Mucosa of descending colon (tissue), 3 donors: ENCODE measurements at regions of chr7 and their contacts with region 1.

Region 1: DNA sequence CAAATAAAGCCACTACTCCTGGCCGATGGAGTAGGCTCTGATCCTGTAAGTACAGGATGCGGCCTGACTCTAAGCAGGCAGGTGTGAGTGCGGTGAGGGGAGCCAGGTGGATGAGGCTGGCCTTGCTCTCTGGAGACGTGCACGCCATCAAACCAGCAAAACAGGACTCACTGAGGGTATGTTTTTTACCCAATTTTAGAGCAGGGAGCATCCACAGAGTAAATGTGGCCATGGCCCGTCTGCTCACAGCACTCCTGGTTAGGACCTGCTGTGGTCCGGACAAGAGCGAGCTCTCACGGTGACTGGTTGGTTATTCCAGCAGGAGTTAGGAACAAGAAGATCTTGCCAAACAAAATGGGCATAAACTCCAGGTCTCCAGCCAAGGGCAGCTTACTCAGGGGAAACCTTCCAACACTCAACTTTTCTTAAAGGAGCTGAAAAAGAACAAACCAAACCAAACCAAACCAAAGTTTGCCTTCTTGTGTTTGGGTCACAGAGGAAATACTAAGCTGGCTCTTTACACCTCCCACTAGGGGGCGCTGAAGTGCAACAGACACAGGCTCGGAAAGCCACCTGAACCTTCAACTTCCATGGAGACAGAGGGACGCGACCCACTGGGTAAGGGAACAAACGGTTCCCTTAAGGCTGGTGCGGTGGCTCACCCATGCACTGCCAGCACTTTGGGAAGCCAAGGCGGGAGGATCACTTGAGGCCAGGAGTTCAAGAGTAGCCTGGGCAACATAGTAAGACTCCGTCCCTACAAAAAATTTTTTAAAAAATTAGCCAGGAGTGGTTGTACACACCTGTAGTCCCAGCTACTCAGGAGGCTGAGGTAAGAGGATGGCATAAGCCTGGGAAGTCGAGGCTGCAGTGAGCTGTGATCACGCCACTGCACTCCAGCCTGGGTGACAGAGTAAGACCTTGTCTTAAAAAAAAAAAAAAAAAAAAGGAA is 122.4 kb downstream of the CLEC2L start:
- DNase-seq: peak; percentile 69 to 86 (median 81)
- ATAC-seq: peak; percentile 84
- H3K4me3 ChIP-seq: no peak overlapping the region
- H3K4me1 ChIP-seq: peaks cover 4% of the 10 kb centered on the region
- CTCF ChIP-seq: peak; percentile 72

Region 2: GRCh38 chr7:139771001-139771970 is 125.4 kb after region 1 on chr7:
- intact Hi-C with region 1: loop called (anchors 5 to 10 kb)
- DNase-seq: no peak
- ATAC-seq: no peak
- H3K4me3 ChIP-seq: no peak overlapping the region
- H3K4me1 ChIP-seq: peaks cover 19% of the 10 kb centered on the region
- CTCF ChIP-seq: no peak

Region 3: DNA sequence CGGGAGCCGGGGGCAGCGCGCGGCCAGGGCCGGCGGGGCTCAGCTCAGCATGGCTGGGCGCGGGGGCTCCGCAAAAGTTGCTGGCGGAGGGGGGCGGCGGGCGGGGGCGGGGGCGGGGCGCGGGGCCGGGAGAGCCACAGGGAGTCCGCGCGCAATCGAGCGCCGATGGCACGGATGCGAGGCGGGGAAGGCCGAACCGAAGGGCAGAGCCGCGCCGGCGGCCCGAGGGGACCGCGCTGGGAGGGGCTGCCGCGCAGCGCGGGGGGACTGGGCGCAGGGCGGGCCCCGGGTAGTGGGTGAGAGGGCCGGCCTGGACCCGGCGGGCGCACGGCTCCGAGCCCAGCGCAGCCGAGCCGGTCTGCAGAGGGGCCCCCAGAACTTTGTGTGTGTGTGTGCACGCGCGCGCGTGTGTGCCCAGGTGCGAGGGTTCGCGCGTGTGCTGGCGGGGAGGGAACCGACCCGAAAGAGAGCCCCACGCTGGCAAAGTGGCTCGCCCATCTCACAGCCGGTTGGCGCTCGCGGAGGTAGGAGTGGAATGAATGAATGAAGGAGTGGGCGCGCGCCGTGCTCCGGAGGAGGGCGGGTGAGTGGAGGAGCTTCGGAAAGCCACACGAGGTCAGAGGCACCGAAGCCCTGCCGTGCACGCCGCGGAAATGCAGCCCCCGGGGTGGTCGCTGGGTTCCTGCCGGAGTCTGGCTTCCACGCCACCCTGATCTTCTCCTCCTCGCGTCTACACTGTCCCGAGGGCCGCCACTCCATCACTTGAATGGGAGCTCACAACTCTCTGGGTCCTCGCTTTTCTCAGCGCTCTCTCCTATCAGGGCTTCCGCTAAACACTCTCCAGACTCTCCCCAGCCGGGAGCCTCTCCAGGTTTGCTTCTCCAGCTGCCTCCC is 132.3 kb after region 1 on chr7 and contains the start of gene HIPK2:
- intact Hi-C with region 1: loop called (anchors 5 to 10 kb)
- DNase-seq: peak; percentile 82 to 88 (median 85)
- ATAC-seq: peak; percentile 85
- H3K4me3 ChIP-seq: peak within 1 kb of the TSS; percentile 66
- H3K4me1 ChIP-seq: peaks cover 14% of the 10 kb centered on the region
- CTCF ChIP-seq: no peak
- total RNA-seq, gene HIPK2: 29.9 to 63.6 (median 39.9) TPM

Region 4: DNA sequence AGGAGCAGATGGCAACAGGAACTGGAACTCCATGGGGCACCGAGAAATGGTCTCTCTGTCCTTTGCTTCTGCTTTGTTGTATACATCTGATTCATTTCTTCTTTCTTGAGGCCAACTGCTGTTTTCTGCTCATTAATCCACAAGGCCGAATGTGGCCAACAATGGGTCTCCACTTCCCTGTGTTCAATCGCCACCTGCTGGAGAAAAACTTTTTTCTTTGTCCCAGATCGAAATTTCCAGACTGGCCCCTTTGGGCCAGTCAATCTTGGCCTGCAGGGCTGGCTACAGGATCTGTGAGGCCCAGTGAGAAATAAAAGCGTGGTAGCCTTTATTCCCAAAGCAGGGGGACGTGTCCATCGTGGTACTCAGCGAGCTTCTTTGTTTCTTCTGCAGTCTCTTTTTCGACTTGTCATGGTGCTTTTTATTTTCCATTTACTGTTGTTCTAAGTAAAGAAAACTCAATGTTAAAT is 358.1 kb after region 1 on chr7:
- intact Hi-C with region 1: loop called (anchors 2 to 5 kb)
- DNase-seq: peak in 1 of 3 donors; percentile 71
- ATAC-seq: peak; percentile 48
- H3K4me3 ChIP-seq: no peak overlapping the region
- H3K4me1 ChIP-seq: no peaks in the 10 kb centered on the region
- CTCF ChIP-seq: no peak

Region 5: DNA sequence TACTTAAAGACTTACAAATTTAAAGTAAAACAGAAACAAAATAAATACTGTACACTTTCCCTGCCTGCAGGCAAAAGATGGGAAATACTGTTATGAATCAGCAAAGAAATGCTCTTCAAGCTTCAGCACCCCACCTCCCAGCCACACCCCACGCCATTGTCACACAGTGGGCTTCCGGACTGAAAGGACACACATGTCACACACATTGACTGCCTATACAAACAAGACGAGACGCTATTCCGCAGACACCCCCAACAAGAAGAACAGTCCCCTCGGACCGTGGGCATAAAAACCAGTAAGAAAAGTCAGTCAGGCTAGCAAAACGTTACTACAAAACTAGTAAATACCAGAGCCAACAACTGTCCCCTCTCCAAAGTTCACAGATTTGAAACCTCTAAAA is 439.1 kb after region 1 on chr7:
- intact Hi-C with region 1: no loop called
- DNase-seq: peak in 1 of 3 donors; percentile 60
- ATAC-seq: peak; percentile 34
- H3K4me3 ChIP-seq: no peak overlapping the region
- H3K4me1 ChIP-seq: peaks cover 9% of the 10 kb centered on the region
- CTCF ChIP-seq: no peak